ENCODE measurements at regions of chr2 and their contacts with region 1.

Region 1: DNA sequence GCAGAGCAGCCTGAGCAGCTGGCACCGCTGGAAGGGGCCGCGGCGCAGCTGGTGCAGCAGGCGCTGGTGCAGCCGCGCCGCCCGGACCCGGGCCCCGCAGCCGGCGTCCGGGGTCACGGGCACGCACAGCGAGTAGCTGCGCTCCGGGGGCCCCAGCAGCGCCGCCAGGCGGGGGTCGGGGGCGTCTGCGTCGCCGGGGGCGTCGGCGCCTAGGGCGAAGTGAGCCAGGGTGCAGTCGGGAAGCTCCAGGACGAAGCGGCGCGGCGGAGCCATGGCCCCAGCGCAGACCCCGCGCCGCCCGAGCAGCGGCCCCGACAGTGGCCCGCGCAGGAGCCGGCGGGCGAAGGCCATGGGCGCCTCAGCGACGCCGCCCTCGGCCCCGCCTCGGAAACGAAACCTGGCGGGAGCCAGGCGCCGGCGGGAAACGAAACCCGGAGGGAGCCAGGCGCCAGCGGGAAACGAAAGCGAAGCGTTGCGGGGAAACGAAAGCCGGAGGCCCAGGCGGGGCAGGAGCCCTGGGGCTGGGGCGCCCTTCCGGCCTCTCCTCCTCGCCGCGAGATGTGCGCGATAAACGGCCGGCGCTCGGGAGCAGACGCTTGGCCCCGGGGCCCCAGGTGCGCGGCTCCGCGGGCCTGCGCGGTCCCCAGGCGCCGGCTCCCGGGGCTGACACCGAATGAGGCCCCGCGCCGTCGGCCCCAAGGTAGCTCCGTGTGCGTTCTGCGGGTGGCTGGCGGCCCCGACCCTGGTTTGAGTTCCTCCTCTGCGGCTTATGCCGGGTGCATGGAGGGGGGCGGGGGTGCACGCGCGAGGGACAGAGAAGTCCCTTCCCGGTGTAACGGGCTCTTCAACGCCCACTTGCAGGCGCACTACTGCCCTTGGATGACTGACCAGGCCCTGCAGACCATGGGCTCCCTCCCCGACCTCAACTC is at the start of gene CMPK2:
- DNase-seq: peak; percentile 69 to 85 (median 82)
- H3K4me3 ChIP-seq: peak within 1 kb of the TSS; percentile 82
- H3K4me3 Mint-ChIP-seq: peak within 1 kb of the TSS; percentile 88 to 100 (median 95)
- H3K27ac ChIP-seq: peak within 1 kb of the TSS; percentile 69
- H3K27ac Mint-ChIP-seq: peak within 1 kb of the TSS; percentile 68 to 96 (median 94)
- H3K4me1 ChIP-seq: peaks cover 16% of the 10 kb centered on the region
- H3K4me1 Mint-ChIP-seq: peaks cover 18 to 21% (median 20%) of the 10 kb centered on the region in 3 donors
- H3K27me3 ChIP-seq: no peaks in the 10 kb centered on the region
- H3K27me3 Mint-ChIP-seq: peaks cover 0 to 1% of the 10 kb centered on the region in 2 donors
- total RNA-seq, gene CMPK2: 0.62 to 1.1 TPM

Region 2: GRCh38 chr2:6780765-6781274 is 84.8 kb before region 1 on chr2:
- CTCF ChIA-PET with region 1: no interaction called
- POLR2A ChIA-PET with region 1: no interaction called
- DNase-seq: no peak
- H3K4me3 ChIP-seq: no peak overlapping the region
- H3K4me3 Mint-ChIP-seq: peak overlapping the region in 6 of 7 donors; percentile 1 to 45 (median 30)
- H3K27ac ChIP-seq: no peak overlapping the region
- H3K27ac Mint-ChIP-seq: peak overlapping the region in 1 of 8 donors; percentile 69
- H3K4me1 ChIP-seq: no peaks in the 10 kb centered on the region
- H3K4me1 Mint-ChIP-seq: peaks cover 3 to 11% (median 10%) of the 10 kb centered on the region in 3 donors
- H3K27me3 ChIP-seq: no peaks in the 10 kb centered on the region
- H3K27me3 Mint-ChIP-seq: peaks cover 0 to 5% of the 10 kb centered on the region in 2 donors

Region 3: DNA sequence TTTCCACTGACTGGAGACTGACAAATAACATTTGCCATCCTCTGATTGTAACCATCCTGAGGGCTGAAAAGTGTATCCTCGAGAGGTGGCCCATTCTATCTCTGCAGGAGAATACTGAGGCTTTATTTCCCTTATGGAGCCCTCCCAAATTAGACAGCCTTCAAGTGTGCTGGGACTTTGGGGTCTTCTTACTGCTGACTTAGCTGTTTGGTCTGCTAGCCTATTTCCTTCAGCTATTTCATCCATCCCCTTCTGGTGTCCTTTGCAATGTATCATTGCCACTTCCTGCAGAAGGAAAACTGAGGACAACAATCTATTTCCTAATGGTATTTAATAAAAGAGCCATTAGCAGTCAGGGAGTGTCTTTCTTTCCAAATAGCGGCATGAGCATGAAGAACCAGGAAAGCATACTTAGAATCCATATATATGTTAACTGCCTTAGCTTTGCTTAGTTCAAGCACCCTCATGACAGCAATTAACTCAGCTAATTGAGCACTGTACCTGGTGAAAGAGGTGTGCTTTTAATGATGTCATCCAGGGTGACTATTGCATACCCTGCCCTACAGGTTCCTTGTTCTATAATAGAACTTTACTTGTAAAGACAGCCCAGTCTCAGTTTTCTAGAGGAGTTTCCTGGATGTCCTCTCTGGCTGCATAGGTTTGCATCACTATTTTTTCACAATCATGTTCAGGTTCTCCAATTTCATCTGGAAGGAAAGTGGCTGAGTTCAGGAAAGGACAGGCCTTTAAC is 23.9 kb before region 1 on chr2:
- CTCF ChIA-PET with region 1: no interaction called
- POLR2A ChIA-PET with region 1: no interaction called
- DNase-seq: no peak
- H3K4me3 ChIP-seq: no peak overlapping the region
- H3K4me3 Mint-ChIP-seq: no peak overlapping the region
- H3K27ac ChIP-seq: no peak overlapping the region
- H3K27ac Mint-ChIP-seq: peak overlapping the region in 1 of 8 donors; percentile 5
- H3K4me1 ChIP-seq: no peaks in the 10 kb centered on the region
- H3K4me1 Mint-ChIP-seq: no peaks in the 10 kb centered on the region
- H3K27me3 ChIP-seq: no peaks in the 10 kb centered on the region
- H3K27me3 Mint-ChIP-seq: no peaks in the 10 kb centered on the region

Region 4: GRCh38 chr2:6877402-6878304 is 12.0 kb after region 1 on chr2 and contains the start of gene RSAD2:
- CTCF ChIA-PET with region 1: interaction called, 24 read pairs
- POLR2A ChIA-PET with region 1: interaction called, 19 read pairs
- DNase-seq: peak in 3 of 5 donors; percentile 54 to 58 (median 58)
- H3K4me3 ChIP-seq: peak within 1 kb of the TSS; percentile 70
- H3K4me3 Mint-ChIP-seq: peak within 1 kb of the TSS; percentile 87 to 97 (median 91)
- H3K27ac ChIP-seq: peak within 1 kb of the TSS; percentile 40
- H3K27ac Mint-ChIP-seq: peak within 1 kb of the TSS; percentile 72 to 96 (median 87)
- H3K4me1 ChIP-seq: peaks cover 46% of the 10 kb centered on the region
- H3K4me1 Mint-ChIP-seq: peaks cover 44 to 54% (median 53%) of the 10 kb centered on the region in 3 donors
- H3K27me3 ChIP-seq: no peaks in the 10 kb centered on the region
- H3K27me3 Mint-ChIP-seq: no peaks in the 10 kb centered on the region
- total RNA-seq, gene RSAD2: 0.85 to 1.00 TPM

Region 5: GRCh38 chr2:6917071-6917760 is 51.6 kb after region 1 on chr2 and contains the start of gene RNF144A:
- CTCF ChIA-PET with region 1: interaction called, 15 read pairs
- POLR2A ChIA-PET with region 1: interaction called, 6 read pairs
- DNase-seq: peak; percentile 62 to 78 (median 73)
- H3K4me3 ChIP-seq: peak within 1 kb of the TSS; percentile 52
- H3K4me3 Mint-ChIP-seq: peak within 1 kb of the TSS; percentile 74 to 94 (median 80)
- H3K27ac ChIP-seq: peak within 1 kb of the TSS; percentile 40
- H3K27ac Mint-ChIP-seq: peak within 1 kb of the TSS in 6 of 8 donors; percentile 12 to 96 (median 76)
- H3K4me1 ChIP-seq: peaks cover 72% of the 10 kb centered on the region
- H3K4me1 Mint-ChIP-seq: peaks cover 50 to 75% (median 70%) of the 10 kb centered on the region in 3 donors
- H3K27me3 ChIP-seq: no peaks in the 10 kb centered on the region
- H3K27me3 Mint-ChIP-seq: peaks cover 0 to 4% of the 10 kb centered on the region in 2 donors
- total RNA-seq, gene RNF144A: 13.5 to 14.9 TPM

Region 6: DNA sequence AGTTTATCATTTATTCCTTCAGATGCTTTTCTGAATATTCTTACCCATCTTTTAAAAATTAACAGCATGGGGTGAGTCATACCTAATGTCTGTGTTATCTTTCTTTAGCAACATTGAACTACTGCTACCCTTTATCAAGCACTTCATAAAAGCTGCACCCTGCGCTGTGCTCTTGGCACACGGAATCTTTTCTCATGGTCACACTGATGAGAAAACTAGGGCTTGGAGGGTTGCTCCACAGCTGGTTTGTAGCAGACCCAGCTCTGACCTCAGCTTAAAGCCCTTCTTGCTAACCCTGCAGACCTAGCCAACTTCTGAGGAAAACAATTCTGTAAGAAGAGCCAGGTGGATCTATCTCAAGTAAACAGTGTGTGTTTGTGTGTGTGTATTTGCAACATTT is 157.9 kb after region 1 on chr2:
- CTCF ChIA-PET with region 1: no interaction called
- POLR2A ChIA-PET with region 1: no interaction called
- DNase-seq: no peak
- H3K4me3 ChIP-seq: no peak overlapping the region
- H3K4me3 Mint-ChIP-seq: no peak overlapping the region
- H3K27ac ChIP-seq: no peak overlapping the region
- H3K27ac Mint-ChIP-seq: no peak overlapping the region
- H3K4me1 ChIP-seq: no peaks in the 10 kb centered on the region
- H3K4me1 Mint-ChIP-seq: no peaks in the 10 kb centered on the region
- H3K27me3 ChIP-seq: no peaks in the 10 kb centered on the region
- H3K27me3 Mint-ChIP-seq: peaks cover 0 to 1% of the 10 kb centered on the region in 2 donors

Region 7: DNA sequence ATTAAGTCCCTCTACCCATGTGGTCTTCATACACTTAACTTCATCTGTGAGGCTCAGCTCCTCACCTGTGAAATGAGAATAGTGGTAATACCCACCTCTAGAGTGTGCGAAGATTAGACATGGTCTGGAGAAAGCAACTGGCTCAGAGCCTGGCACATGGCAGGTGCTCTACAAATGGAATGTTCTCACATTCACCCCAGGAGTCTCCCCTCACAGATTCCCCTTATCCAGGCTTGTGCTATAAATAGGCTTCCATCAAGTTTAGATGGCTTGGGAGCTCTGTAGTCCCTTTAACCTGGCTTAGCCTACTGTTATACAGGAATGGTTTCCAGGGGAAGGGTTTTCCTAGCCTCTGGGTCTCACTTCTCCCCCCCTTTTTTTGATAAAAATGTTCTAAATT is 507.5 kb after region 1 on chr2:
- CTCF ChIA-PET with region 1: no interaction called
- POLR2A ChIA-PET with region 1: no interaction called
- DNase-seq: no peak
- H3K4me3 ChIP-seq: no peak overlapping the region
- H3K4me3 Mint-ChIP-seq: no peak overlapping the region
- H3K27ac ChIP-seq: no peak overlapping the region
- H3K27ac Mint-ChIP-seq: no peak overlapping the region
- H3K4me1 ChIP-seq: no peaks in the 10 kb centered on the region
- H3K4me1 Mint-ChIP-seq: no peaks in the 10 kb centered on the region
- H3K27me3 ChIP-seq: no peaks in the 10 kb centered on the region
- H3K27me3 Mint-ChIP-seq: peaks cover 3 to 22% of the 10 kb centered on the region in 2 donors